B cell (primary cell): ENCODE measurements at regions of chr11 and their contacts with region 1.

Region 1: DNA sequence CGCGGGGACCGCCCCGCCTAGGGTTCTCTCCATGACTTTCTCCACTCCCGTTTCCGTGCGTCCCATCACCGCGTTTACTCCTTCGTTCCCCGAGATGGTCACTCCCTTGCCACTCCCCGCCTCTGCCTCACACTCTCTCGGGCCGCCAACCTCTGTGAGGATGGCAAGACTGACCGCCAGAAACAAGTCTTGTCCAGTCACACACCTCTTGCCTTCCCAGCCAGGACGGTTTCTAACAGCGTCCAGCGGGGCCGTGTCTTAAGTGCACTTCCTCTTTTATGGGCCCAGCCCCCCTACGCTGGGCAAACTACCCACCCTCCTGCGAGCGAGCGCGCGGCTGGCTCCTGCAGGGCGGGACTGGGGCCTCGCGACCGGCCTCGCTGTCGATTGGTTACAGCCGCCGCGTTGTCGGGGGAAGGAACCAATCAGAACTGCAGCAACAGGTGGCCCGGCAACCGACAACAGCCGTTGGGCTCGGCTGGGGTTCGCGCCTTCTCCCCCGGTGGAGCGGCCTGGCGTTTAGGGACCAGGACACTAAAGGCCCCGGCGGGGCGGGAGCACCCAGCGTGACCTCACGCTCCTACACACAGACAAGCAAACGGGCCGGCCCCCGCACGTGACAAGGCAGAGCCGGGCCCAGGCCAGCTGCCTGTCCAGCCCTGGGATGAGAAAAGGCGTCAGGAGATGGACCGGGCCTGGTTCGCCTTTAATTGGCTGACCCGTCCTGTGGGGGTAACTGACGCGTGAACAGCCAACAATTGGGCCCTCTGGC is 512 bp upstream of the UCP2 start:
- DNase-seq: peak; percentile 97
- ATAC-seq: peak; percentile 65
- H3K4me3 ChIP-seq: peak overlapping the region; percentile 45 to 100 (median 96)
- H3K4me3 Mint-ChIP-seq: peak overlapping the region; percentile 99
- H3K27ac ChIP-seq: peak overlapping the region; percentile 94 to 99
- H3K27ac Mint-ChIP-seq: peak overlapping the region; percentile 99
- H3K4me1 ChIP-seq: peaks cover 40 to 54% of the 10 kb centered on the region in 2 donors
- H3K4me1 Mint-ChIP-seq: peaks cover 57% of the 10 kb centered on the region
- H3K27me3 ChIP-seq: no peaks in the 10 kb centered on the region
- H3K27me3 Mint-ChIP-seq: no peaks in the 10 kb centered on the region
- CTCF ChIP-seq: no peak

Region 2: GRCh38 chr11:73965076-73965860 is 17.9 kb before region 1 on chr11:
- CTCF ChIA-PET with region 1: interaction called, 97 read pairs
- POLR2A ChIA-PET with region 1: interaction called, 155 read pairs
- intact Hi-C with region 1: loop called (anchors 1 kb)
- DNase-seq: no peak
- ATAC-seq: no peak
- H3K4me3 ChIP-seq: no peak overlapping the region
- H3K4me3 Mint-ChIP-seq: no peak overlapping the region
- H3K27ac ChIP-seq: no peak overlapping the region
- H3K27ac Mint-ChIP-seq: peak overlapping the region; percentile 53
- H3K4me1 ChIP-seq: peaks cover 22 to 38% of the 10 kb centered on the region in 2 donors
- H3K4me1 Mint-ChIP-seq: peaks cover 36% of the 10 kb centered on the region
- H3K27me3 ChIP-seq: no peaks in the 10 kb centered on the region
- H3K27me3 Mint-ChIP-seq: no peaks in the 10 kb centered on the region
- CTCF ChIP-seq: no peak

Region 3: GRCh38 chr11:74004759-74005615 is 21.8 kb after region 1 on chr11:
- CTCF ChIA-PET with region 1: interaction called, 11 read pairs
- POLR2A ChIA-PET with region 1: interaction called, 63 read pairs
- intact Hi-C with region 1: no loop called
- DNase-seq: peak; percentile 69
- ATAC-seq: peak; percentile 99
- H3K4me3 ChIP-seq: no peak overlapping the region
- H3K4me3 Mint-ChIP-seq: no peak overlapping the region
- H3K27ac ChIP-seq: peak overlapping the region in 1 of 2 donors; percentile 20
- H3K27ac Mint-ChIP-seq: peak overlapping the region; percentile 43
- H3K4me1 ChIP-seq: peaks cover 26 to 31% of the 10 kb centered on the region in 2 donors
- H3K4me1 Mint-ChIP-seq: peaks cover 52% of the 10 kb centered on the region
- H3K27me3 ChIP-seq: no peaks in the 10 kb centered on the region
- H3K27me3 Mint-ChIP-seq: no peaks in the 10 kb centered on the region
- CTCF ChIP-seq: no peak

Region 4: GRCh38 chr11:74018331-74019005 is 35.3 kb after region 1 on chr11:
- CTCF ChIA-PET with region 1: interaction called, 6 read pairs
- POLR2A ChIA-PET with region 1: interaction called, 28 read pairs
- intact Hi-C with region 1: no loop called
- DNase-seq: no peak
- ATAC-seq: no peak
- H3K4me3 ChIP-seq: no peak overlapping the region
- H3K4me3 Mint-ChIP-seq: no peak overlapping the region
- H3K27ac ChIP-seq: no peak overlapping the region
- H3K27ac Mint-ChIP-seq: peak overlapping the region; percentile 5
- H3K4me1 ChIP-seq: peaks cover 42 to 67% of the 10 kb centered on the region in 2 donors
- H3K4me1 Mint-ChIP-seq: peaks cover 37% of the 10 kb centered on the region
- H3K27me3 ChIP-seq: no peaks in the 10 kb centered on the region
- H3K27me3 Mint-ChIP-seq: no peaks in the 10 kb centered on the region
- CTCF ChIP-seq: no peak

Region 5: DNA sequence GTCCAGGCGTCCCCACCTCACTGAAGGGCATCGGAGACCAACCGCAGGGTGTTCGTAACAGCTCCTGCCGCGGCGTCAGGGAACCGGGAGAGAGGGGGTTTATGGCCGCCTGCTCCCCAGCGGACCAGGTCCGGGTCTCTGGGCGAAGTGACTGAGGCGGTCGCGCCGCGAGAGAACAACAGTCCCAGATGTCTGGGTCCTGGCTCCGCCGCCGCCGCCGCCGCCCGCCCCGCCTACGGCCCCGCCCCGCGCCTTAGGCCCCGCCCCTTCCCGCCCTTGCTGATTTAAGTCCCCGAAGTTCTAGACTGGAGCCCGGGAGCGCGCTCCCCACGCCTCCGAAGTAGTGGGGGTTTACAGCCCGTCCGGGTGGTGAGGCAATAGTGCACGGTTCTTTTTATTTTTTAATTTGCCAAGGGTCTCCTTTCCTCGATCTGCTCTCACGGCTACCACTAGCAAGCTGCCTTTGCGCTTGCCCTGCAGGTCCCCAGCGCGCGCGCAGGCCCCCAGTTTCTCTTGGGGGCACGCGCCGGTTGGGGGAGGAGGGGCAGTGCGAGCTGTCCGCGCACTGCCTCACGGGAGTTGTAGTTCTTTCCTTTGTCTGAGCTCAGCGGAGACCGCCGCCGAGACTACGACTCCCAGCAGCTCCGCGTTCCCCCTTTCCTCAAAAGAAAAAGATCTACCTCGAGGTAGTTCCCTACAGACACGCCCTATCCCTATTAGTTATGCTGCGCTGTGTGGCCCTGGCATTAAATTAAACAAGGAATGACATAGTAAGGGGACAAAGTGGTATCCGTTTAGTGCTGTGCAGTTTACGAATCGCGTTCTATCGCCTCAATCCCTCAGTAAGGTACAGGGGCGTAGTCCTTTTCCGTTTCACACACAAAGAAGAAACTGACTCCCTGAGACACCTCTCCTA is 415.3 kb after region 1 on chr11 and contains the start of gene PGM2L1:
- CTCF ChIA-PET with region 1: no interaction called
- POLR2A ChIA-PET with region 1: interaction called, 4 read pairs
- intact Hi-C with region 1: loop called (anchors 2 kb)
- DNase-seq: peak; percentile 98
- ATAC-seq: peak; percentile 86
- H3K4me3 ChIP-seq: peak within 1 kb of the TSS; percentile 58 to 94 (median 89)
- H3K4me3 Mint-ChIP-seq: peak within 1 kb of the TSS; percentile 95
- H3K27ac ChIP-seq: peak within 1 kb of the TSS; percentile 66 to 87
- H3K27ac Mint-ChIP-seq: peak within 1 kb of the TSS; percentile 98
- H3K4me1 ChIP-seq: peaks cover 10% of the 10 kb centered on the region in 2 donors
- H3K4me1 Mint-ChIP-seq: peaks cover 14% of the 10 kb centered on the region
- H3K27me3 ChIP-seq: no peaks in the 10 kb centered on the region
- H3K27me3 Mint-ChIP-seq: no peaks in the 10 kb centered on the region
- CTCF ChIP-seq: no peak
- total RNA-seq, gene PGM2L1: 8.4 and 12.6 TPM in 2 replicates